CD8-positive, alpha-beta T cell (primary cell): ENCODE measurements at regions of chr3 and their contacts with region 1.

Region 1: GRCh38 chr3:121660356-121661171 is at the start of gene HCLS1:
- DNase-seq: peak; percentile 52 to 90 (median 71)
- ATAC-seq: peak; percentile 83
- H3K4me3 ChIP-seq: peak within 1 kb of the TSS; percentile 58
- H3K4me3 Mint-ChIP-seq: peak within 1 kb of the TSS; percentile 92
- H3K27ac ChIP-seq: peak within 1 kb of the TSS; percentile 86 to 95
- H3K27ac Mint-ChIP-seq: peak within 1 kb of the TSS; percentile 99
- H3K4me1 ChIP-seq: peaks cover 43% of the 10 kb centered on the region
- H3K4me1 Mint-ChIP-seq: peaks cover 54% of the 10 kb centered on the region
- H3K27me3 ChIP-seq: no peaks in the 10 kb centered on the region
- H3K27me3 Mint-ChIP-seq: no peaks in the 10 kb centered on the region
- CTCF ChIP-seq: no peak
- total RNA-seq, gene HCLS1: 162 to 179 TPM

Region 2: DNA sequence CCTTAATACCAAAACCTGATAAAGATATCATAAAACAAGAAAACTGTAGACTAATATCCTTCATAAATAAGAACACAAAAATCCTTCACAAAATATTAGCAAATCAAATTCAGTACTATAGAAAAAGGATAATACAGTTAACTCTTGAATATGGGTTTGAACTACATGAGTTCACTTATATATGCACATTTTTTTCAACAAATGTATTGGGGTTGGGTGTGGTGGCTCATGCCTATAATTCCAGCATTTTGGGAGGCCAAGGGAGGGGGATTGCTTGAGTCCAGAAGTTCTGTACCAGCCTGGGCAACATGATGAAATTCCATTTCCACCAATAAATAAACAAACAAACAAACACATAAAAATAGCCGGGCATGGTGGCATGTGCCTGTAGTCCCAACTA is 49.8 kb after region 1 on chr3:
- CTCF ChIA-PET with region 1: no interaction called
- POLR2A ChIA-PET with region 1: no interaction called
- intact Hi-C with region 1: loop called in 1 of 2 experiments (anchors 5 kb)
- DNase-seq: no peak
- ATAC-seq: no peak
- H3K4me3 ChIP-seq: no peak overlapping the region
- H3K4me3 Mint-ChIP-seq: no peak overlapping the region
- H3K27ac ChIP-seq: no peak overlapping the region
- H3K27ac Mint-ChIP-seq: no peak overlapping the region
- H3K4me1 ChIP-seq: no peaks in the 10 kb centered on the region
- H3K4me1 Mint-ChIP-seq: peaks cover 6% of the 10 kb centered on the region
- H3K27me3 ChIP-seq: no peaks in the 10 kb centered on the region
- H3K27me3 Mint-ChIP-seq: no peaks in the 10 kb centered on the region
- CTCF ChIP-seq: no peak

Region 3: DNA sequence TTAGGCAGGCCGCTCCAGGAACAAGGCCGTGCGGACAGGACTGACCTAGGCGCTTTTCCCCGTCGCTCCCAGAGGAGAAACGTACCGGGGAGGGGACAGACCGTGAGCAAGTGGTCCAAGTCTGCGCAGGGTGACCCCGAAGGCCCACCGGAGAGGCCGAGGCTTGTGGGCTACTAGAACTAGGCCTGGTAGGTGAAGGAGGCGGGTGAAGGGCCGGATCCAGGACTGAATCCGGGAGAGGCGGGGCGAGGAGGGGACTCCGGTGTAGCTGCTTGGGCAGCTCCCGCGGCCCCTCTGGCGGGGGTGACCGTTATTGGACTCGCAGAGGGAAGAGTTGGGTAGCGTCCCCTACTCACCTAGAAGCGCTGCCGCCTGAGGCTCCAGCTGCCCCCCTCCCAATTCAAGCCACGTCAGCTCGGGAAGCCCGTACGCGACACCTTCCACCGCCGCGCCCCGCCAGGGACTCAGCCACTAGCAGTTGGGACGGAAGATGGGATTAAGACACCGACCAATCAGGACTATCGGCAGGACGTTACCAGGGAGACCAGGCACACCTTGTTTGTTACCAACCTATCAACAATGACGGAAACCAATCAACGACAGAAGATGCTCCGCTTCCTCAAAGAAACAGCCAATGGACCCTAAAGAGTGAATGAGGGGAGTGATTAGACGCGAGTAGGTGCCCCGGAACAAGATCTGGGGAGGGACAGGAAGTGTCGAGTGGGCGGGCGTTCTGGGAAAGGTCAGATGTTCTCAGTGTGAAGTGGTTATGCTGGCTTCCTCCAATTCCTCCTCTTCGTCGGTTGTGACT is 88.9 kb after region 1 on chr3 and contains the start of gene GOLGB1:
- CTCF ChIA-PET with region 1: no interaction called
- POLR2A ChIA-PET with region 1: interaction called, 8 read pairs
- intact Hi-C with region 1: loop called (anchors 1 kb)
- DNase-seq: peak; percentile 74 to 99 (median 90)
- ATAC-seq: peak; percentile 94
- H3K4me3 ChIP-seq: peak within 1 kb of the TSS; percentile 86 to 94
- H3K4me3 Mint-ChIP-seq: no peak within 1 kb of the TSS
- H3K27ac ChIP-seq: peak within 1 kb of the TSS; percentile 97 to 98
- H3K27ac Mint-ChIP-seq: no peak within 1 kb of the TSS
- H3K4me1 ChIP-seq: peaks cover 19% of the 10 kb centered on the region
- H3K4me1 Mint-ChIP-seq: peaks cover 14% of the 10 kb centered on the region
- H3K27me3 ChIP-seq: peaks cover 0 to 6% of the 10 kb centered on the region in 2 experiments
- H3K27me3 Mint-ChIP-seq: peaks cover 4% of the 10 kb centered on the region
- CTCF ChIP-seq: no peak
- total RNA-seq, gene GOLGB1: 47.4 to 53.9 TPM

Region 4: GRCh38 chr3:122415720-122416654 is 755.4 kb after region 1 on chr3 and contains the start of gene WDR5B:
- CTCF ChIA-PET with region 1: no interaction called
- POLR2A ChIA-PET with region 1: no interaction called
- intact Hi-C with region 1: loop called (anchors 1 to 10 kb)
- DNase-seq: peak; percentile 97 to 99 (median 98)
- ATAC-seq: peak; percentile 88
- H3K4me3 ChIP-seq: peak within 1 kb of the TSS; percentile 71 to 76
- H3K4me3 Mint-ChIP-seq: peak within 1 kb of the TSS; percentile 97
- H3K27ac ChIP-seq: peak within 1 kb of the TSS; percentile 91 to 94
- H3K27ac Mint-ChIP-seq: peak within 1 kb of the TSS; percentile 100
- H3K4me1 ChIP-seq: peaks cover 26% of the 10 kb centered on the region
- H3K4me1 Mint-ChIP-seq: peaks cover 58% of the 10 kb centered on the region
- H3K27me3 ChIP-seq: no peaks in the 10 kb centered on the region
- H3K27me3 Mint-ChIP-seq: no peaks in the 10 kb centered on the region
- CTCF ChIP-seq: no peak
- total RNA-seq, gene WDR5B: 1.9 to 2.7 TPM

Region 5: GRCh38 chr3:122793568-122794416 is 1133.2 kb after region 1 on chr3 and contains the start of gene HSPBAP1:
- CTCF ChIA-PET with region 1: no interaction called
- POLR2A ChIA-PET with region 1: no interaction called
- intact Hi-C with region 1: loop called (anchors 10 kb)
- DNase-seq: peak; percentile 72 to 95 (median 90)
- ATAC-seq: peak; percentile 67
- H3K4me3 ChIP-seq: peak within 1 kb of the TSS; percentile 78 to 81
- H3K4me3 Mint-ChIP-seq: peak within 1 kb of the TSS; percentile 91
- H3K27ac ChIP-seq: peak within 1 kb of the TSS; percentile 77 to 91
- H3K27ac Mint-ChIP-seq: no peak within 1 kb of the TSS
- H3K4me1 ChIP-seq: peaks cover 28% of the 10 kb centered on the region
- H3K4me1 Mint-ChIP-seq: peaks cover 38% of the 10 kb centered on the region
- H3K27me3 ChIP-seq: no peaks in the 10 kb centered on the region
- H3K27me3 Mint-ChIP-seq: no peaks in the 10 kb centered on the region
- CTCF ChIP-seq: no peak
- total RNA-seq, gene HSPBAP1: 8.7 to 9.3 TPM